Kidney (tissue), 22 donors: ENCODE measurements at regions of chr19 and their contacts with region 1.

Region 1: GRCh38 chr19:44845612-44846454 is at the start of gene NECTIN2:
- DNase-seq: peak; percentile 99 to 100 (median 100)
- H3K4me3 ChIP-seq: peak within 1 kb of the TSS; percentile 88 to 95 (median 91)
- H3K27ac ChIP-seq: peak within 1 kb of the TSS; percentile 95 to 97
- H3K4me1 ChIP-seq: peaks cover 0 to 24% (median 4%) of the 10 kb centered on the region in 3 donors
- H3K27me3 ChIP-seq: no peaks in the 10 kb centered on the region
- CTCF ChIP-seq: peak; percentile 60
- total RNA-seq, gene NECTIN2: 110 TPM

Region 2: GRCh38 chr19:44741841-44742352 is 103.9 kb before region 1 on chr19:
- intact Hi-C with region 1: no loop called
- DNase-seq: peak; percentile 38 to 99 (median 68)
- H3K4me3 ChIP-seq: no peak overlapping the region
- H3K27ac ChIP-seq: peak overlapping the region; percentile 82 to 97
- H3K4me1 ChIP-seq: peaks cover 0 to 22% (median 19%) of the 10 kb centered on the region in 3 donors
- H3K27me3 ChIP-seq: no peaks in the 10 kb centered on the region
- CTCF ChIP-seq: no peak

Region 3: GRCh38 chr19:44796701-44797115 is 49.1 kb before region 1 on chr19:
- intact Hi-C with region 1: loop called (anchors 10 kb)
- DNase-seq: peak; percentile 43 to 71 (median 59)
- H3K4me3 ChIP-seq: no peak overlapping the region
- H3K27ac ChIP-seq: peak overlapping the region in 1 of 2 donors; percentile 41
- H3K4me1 ChIP-seq: peaks cover 0 to 2% (median 0%) of the 10 kb centered on the region in 3 donors
- H3K27me3 ChIP-seq: no peaks in the 10 kb centered on the region
- CTCF ChIP-seq: no peak